B cell (primary cell): ENCODE measurements at regions of chr10 and their contacts with region 1.

Region 1: DNA sequence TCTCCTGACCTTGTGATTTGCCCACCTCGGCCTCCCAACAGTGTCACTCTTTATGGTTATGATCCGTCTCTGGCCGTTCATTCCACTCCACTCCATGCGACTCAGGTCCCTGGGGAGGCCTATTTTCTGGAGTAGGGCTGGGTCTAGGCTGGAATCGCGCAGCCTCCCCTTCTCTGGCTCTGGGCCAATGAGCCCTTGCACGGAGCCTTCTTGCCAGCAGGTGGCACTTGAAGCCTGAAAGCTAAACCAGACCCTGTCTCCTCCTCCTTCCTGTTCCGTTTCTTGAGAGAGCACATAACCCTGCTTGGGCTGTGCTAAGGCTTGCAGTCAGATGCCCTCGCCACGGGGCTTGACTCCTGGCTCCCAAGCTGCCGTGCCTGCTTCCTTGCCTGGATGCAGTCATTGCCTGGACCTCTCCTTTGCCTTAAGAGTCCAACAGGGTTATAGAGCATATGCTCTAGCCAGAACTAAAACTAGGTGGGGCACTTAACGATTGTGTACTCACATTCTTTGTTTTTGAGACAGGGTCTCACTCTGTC is 9.6 kb upstream of the DNAJB12 start:
- DNase-seq: peak; percentile 89
- ATAC-seq: peak; percentile 100
- H3K4me3 ChIP-seq: peak overlapping the region in 4 of 5 experiments; percentile 17 to 33 (median 26)
- H3K4me3 Mint-ChIP-seq: peak overlapping the region; percentile 46
- H3K27ac ChIP-seq: peak overlapping the region; percentile 55 to 70
- H3K27ac Mint-ChIP-seq: peak overlapping the region; percentile 51
- H3K4me1 ChIP-seq: peaks cover 9 to 10% of the 10 kb centered on the region in 2 donors
- H3K4me1 Mint-ChIP-seq: peaks cover 12% of the 10 kb centered on the region
- H3K27me3 ChIP-seq: no peaks in the 10 kb centered on the region
- H3K27me3 Mint-ChIP-seq: no peaks in the 10 kb centered on the region
- CTCF ChIP-seq: peak; percentile 87

Region 2: DNA sequence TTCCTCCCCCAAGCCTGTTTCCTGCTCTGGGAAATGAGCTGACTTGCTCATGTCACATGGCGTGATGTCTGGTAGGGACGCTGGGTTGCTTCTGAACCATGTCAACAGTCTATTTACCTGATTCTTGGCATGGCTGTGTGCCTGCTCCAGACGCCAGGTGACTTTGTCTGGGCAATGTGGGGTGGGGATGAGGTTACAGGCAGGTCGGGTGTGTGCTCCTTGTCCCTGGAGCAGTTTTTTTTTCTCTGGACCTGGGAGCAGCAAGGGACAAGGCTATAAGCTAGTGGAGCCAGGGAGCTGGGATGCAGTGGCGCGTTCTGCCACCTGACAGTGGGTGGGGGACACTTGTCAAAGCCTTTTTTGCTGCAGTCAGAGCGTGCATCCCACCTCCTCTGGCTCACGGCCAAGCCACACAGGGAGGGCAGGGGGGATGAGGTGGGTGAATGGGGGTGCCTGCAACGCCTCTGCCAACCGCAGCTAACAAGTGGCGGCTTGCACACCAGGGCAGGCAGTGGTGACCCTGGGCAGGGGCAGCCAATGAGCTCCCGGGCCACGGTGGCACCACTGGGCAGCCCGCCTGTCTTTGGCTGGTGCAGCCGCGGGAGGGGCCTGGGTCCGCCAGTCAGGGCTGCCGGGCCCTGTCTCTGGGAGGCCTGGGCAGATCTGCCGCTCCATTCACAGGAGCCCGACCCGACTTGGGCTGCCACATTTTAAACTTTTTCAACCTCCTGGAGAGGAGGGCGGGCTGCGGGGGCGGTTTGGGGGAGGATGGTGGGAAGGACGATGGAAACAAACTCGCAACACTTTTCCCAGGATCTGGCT is 32.5 kb before region 1 on chr10:
- CTCF ChIA-PET with region 1: no interaction called
- POLR2A ChIA-PET with region 1: no interaction called
- intact Hi-C with region 1: no loop called
- DNase-seq: peak; percentile 93
- ATAC-seq: peak; percentile 79
- H3K4me3 ChIP-seq: peak overlapping the region in 4 of 5 experiments; percentile 31 to 38 (median 35)
- H3K4me3 Mint-ChIP-seq: peak overlapping the region; percentile 76
- H3K27ac ChIP-seq: peak overlapping the region; percentile 83 to 86
- H3K27ac Mint-ChIP-seq: peak overlapping the region; percentile 96
- H3K4me1 ChIP-seq: peaks cover 84 to 100% of the 10 kb centered on the region in 2 donors
- H3K4me1 Mint-ChIP-seq: peaks cover 90% of the 10 kb centered on the region
- H3K27me3 ChIP-seq: no peaks in the 10 kb centered on the region
- H3K27me3 Mint-ChIP-seq: no peaks in the 10 kb centered on the region
- CTCF ChIP-seq: peak; percentile 55

Region 3: DNA sequence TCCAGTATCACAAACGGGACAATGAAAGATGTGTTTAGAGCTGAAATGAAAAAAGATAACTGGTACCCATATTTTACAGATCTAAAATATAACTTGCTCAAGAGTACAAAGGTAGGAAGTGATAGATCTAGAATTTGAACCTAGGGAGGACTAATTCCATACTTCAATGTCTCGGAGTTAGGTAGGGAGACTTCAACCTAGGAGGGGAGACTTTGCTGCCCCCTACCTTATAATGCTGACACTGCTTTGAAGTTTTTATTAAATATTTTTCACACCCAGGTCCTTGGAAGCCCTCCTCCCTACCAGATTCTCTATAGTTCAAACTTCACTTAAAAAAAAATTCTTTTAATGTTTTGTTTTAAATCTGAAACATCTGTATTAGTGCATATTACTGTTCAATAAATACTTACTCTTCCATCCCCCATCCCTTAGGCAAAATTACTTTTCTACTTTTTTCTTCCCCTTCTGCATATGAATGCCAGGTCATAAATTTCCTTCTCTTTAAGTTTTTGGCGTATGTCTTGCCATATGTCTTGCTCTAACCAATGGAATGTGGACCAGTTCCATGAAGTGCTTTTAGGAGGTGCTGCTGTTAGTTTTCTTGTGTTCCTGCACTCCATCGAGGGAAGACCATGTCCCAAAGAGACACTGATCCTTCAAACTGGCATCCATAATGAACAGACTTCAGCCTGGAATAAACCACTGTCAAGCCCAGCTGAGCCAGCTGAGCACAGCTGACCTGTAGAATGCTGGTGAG is 203.8 kb after region 1 on chr10:
- CTCF ChIA-PET with region 1: interaction called, 6 read pairs
- POLR2A ChIA-PET with region 1: no interaction called
- intact Hi-C with region 1: loop called (anchors 5 kb)
- DNase-seq: peak; percentile 20
- ATAC-seq: no peak
- H3K4me3 ChIP-seq: no peak overlapping the region
- H3K4me3 Mint-ChIP-seq: no peak overlapping the region
- H3K27ac ChIP-seq: no peak overlapping the region
- H3K27ac Mint-ChIP-seq: no peak overlapping the region
- H3K4me1 ChIP-seq: peaks cover 7% of the 10 kb centered on the region in 2 donors
- H3K4me1 Mint-ChIP-seq: peaks cover 12% of the 10 kb centered on the region
- H3K27me3 ChIP-seq: no peaks in the 10 kb centered on the region
- H3K27me3 Mint-ChIP-seq: no peaks in the 10 kb centered on the region
- CTCF ChIP-seq: peak; percentile 60

Region 4: DNA sequence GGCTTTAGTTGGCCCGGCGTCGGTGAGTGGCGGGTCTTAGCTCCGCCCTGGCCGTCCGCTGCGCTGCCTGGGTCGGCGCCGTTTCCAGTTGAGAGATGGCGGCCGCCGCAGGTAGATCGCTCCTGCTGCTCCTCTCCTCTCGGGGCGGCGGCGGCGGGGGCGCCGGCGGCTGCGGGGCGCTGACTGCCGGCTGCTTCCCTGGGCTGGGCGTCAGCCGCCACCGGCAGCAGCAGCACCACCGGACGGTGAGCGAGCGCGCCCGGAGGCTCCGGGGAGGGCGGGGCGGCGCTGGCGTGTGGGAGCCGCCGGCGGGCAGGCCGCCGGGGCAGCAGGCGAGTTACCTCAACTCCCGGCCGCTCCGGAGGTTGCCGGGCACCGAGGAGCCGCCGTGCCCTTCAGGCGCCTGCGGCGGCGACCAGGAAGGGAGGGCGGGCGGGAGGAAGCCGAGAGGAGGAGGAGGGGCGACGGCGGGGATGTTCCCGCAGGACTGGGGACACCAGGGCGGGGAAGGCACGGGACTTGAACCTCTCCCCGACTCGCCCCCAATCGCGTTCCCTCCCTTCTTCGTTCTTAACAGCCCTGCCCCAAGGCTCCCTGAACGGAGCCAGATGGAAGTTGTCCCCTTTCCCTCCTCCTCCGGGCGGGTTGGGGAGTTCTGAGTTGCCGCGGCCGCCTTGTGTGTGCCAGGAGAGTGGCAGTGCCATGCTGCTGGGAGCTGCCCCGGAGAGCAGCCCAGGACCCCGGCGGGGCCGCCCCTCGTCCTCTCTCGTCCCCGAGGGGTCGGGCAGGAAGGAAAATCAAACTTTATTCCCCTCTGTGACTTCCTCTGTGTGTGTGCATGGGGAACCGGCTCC is 328.0 kb after region 1 on chr10 and contains the start of gene MCU:
- CTCF ChIA-PET with region 1: interaction called, 7 read pairs
- POLR2A ChIA-PET with region 1: no interaction called
- intact Hi-C with region 1: loop called (anchors 2 kb)
- DNase-seq: peak; percentile 94
- ATAC-seq: peak; percentile 95
- H3K4me3 ChIP-seq: peak within 1 kb of the TSS; percentile 64 to 91 (median 79)
- H3K4me3 Mint-ChIP-seq: peak within 1 kb of the TSS; percentile 95
- H3K27ac ChIP-seq: peak within 1 kb of the TSS; percentile 58 to 72
- H3K27ac Mint-ChIP-seq: peak within 1 kb of the TSS; percentile 91
- H3K4me1 ChIP-seq: peaks cover 28 to 33% of the 10 kb centered on the region in 2 donors
- H3K4me1 Mint-ChIP-seq: peaks cover 43% of the 10 kb centered on the region
- H3K27me3 ChIP-seq: no peaks in the 10 kb centered on the region
- H3K27me3 Mint-ChIP-seq: no peaks in the 10 kb centered on the region
- CTCF ChIP-seq: no peak
- total RNA-seq, gene MCU: 17.6 and 21.1 TPM in 2 replicates

Region 5: DNA sequence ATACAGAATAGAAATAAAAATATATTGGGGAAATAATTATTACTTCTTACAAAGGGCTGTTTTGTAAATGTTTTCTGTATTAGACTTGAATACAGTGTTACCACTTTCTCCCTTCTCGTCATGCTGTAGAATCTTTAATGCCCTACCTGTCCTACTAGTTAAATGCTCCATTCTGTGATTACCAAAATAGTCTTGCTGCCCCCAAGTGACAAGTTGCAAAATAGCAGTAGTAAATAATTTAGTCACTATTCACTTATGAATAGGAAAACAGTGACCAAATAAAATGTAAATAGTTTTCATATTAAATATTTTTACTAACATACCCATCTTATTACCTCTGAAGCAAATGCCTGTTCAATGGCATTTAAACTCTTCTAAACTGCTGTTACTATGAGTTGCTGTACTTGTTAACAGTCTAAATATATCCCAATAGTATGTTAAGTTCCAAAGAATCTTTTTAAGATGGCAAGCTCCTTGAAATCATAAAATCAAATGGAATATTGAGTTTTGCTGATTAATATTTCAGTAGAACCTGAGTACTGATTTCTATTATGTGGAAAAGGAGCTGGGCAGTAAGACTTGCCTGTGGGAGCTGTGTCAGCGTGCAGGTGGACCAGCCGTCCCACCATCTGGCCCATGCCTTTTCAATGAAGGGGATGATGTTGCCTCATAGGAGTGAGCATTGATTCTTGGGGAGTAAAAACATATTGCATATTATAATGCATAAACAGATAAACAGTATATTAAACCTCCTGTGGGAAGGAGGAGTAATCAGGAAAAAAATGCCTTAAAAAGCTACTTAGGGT is 511.1 kb after region 1 on chr10:
- CTCF ChIA-PET with region 1: interaction called, 25 read pairs
- POLR2A ChIA-PET with region 1: no interaction called
- intact Hi-C with region 1: loop called (anchors 1 kb)
- DNase-seq: peak; percentile 36
- ATAC-seq: no peak
- H3K4me3 ChIP-seq: no peak overlapping the region
- H3K4me3 Mint-ChIP-seq: no peak overlapping the region
- H3K27ac ChIP-seq: no peak overlapping the region
- H3K27ac Mint-ChIP-seq: no peak overlapping the region
- H3K4me1 ChIP-seq: no peaks in the 10 kb centered on the region
- H3K4me1 Mint-ChIP-seq: peaks cover 3% of the 10 kb centered on the region
- H3K27me3 ChIP-seq: no peaks in the 10 kb centered on the region
- H3K27me3 Mint-ChIP-seq: no peaks in the 10 kb centered on the region
- CTCF ChIP-seq: peak; percentile 36

Region 6: DNA sequence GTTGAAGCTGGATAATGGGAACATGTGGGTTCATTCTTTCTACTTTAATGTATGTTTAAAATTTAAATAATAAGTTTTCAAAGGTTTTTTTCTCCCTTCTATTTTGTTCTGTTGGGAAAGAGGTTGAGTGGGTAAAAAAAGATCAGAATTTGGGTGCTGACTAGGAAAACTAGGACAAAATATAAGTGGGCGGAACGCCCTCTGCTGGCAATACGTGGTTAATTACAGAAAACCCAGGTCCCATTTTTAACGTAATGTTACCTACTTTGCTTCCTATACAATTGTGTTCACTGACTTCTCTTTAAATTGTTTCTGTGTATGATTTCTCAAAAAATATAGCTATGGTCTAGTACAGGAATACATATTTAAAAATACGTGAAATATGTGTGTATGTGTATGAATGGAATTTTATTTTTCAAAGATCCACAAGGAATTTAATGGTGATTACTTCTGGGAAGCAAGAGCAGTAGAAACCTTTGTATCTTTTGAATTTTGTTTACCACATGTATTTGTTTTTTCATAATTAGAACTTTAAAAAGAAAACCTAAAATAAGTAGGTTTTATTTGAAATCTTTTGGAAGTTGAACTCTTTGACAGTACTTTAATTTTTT is 794.8 kb after region 1 on chr10:
- CTCF ChIA-PET with region 1: interaction called, 7 read pairs
- POLR2A ChIA-PET with region 1: no interaction called
- intact Hi-C with region 1: loop called (anchors 1 kb)
- DNase-seq: peak; percentile 73
- ATAC-seq: peak; percentile 60
- H3K4me3 ChIP-seq: no peak overlapping the region
- H3K4me3 Mint-ChIP-seq: no peak overlapping the region
- H3K27ac ChIP-seq: peak overlapping the region in 1 of 2 donors; percentile 30
- H3K27ac Mint-ChIP-seq: no peak overlapping the region
- H3K4me1 ChIP-seq: peaks cover 0 to 3% of the 10 kb centered on the region in 2 donors
- H3K4me1 Mint-ChIP-seq: peaks cover 29% of the 10 kb centered on the region
- H3K27me3 ChIP-seq: no peaks in the 10 kb centered on the region
- H3K27me3 Mint-ChIP-seq: no peaks in the 10 kb centered on the region
- CTCF ChIP-seq: peak; percentile 97